BJ (cell line): ENCODE measurements at regions of chr5 and their contacts with region 1.

Region 1: DNA sequence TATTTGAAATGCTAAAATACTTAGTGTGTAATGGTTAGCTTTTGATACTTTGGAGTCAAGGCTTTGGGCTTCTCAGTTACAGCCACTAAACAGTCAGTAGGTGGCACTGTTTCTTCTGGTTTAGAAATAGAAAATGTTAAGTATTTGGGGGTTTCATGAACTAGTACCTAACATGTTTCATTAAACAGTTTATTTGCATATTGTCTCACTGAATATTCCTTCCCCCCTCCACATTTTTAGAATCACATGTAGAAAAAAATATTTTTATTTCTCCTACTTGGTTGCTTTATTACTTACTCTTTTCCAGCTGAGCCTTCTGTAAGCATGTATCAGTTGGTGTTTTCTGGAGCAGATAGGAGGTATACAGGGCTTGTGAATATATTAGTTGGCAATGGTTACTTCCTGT is 48.0 kb downstream of the IPO11 start:
- DNase-seq: no peak
- H3K4me3 ChIP-seq: no peak overlapping the region
- H3K27me3 ChIP-seq: no peaks in the 10 kb centered on the region
- CTCF ChIP-seq: peak; percentile 80

Region 2: GRCh38 chr5:62450259-62450658 is 10.3 kb before region 1 on chr5:
- CTCF ChIA-PET with region 1: interaction called, 10 read pairs
- POLR2A ChIA-PET with region 1: no interaction called
- DNase-seq: no peak
- H3K4me3 ChIP-seq: no peak overlapping the region
- H3K27me3 ChIP-seq: no peaks in the 10 kb centered on the region
- CTCF ChIP-seq: no peak

Region 3: DNA sequence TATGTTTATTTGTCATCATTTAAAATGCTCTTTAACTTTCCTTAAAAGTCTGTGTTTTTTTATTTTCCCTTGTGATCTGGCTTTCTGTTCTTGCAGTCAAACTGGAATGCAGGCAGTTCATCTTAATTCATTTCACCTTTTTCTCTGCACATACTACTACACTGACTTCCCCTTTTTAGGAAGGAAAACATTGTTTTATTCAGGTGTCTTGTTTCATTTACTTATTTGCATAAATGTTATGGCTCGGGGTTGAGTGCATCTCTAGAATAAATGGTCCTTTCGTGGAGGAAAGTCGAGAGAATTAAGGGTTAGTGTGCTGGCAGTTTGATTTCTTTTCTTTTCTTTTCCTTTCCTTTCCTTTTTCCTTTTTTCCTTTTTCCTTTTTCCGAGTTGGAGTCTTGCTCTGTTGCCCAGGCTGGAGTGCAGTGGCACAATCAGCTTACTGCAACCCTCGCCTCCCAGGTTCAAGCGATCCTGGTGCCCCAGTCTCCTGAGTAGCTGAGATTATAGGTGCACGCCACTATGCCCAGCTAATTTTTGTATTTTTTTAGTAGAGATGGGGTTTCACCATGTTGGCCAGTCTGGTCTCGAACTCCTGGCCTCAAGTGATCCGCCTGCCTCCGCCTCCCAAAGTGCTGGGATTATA is 42.0 kb after region 1 on chr5:
- CTCF ChIA-PET with region 1: no interaction called
- POLR2A ChIA-PET with region 1: interaction called, 14 read pairs
- DNase-seq: no peak
- H3K4me3 ChIP-seq: no peak overlapping the region
- H3K27me3 ChIP-seq: no peaks in the 10 kb centered on the region
- CTCF ChIP-seq: no peak